Activated T-helper 2 cell treated with anti-CD3 and anti-CD28 coated beads, Interferon-gamma antibody, Interleukin-2, Interleukin-4, amounts not matched to agents 10 μg/mL and 5 μg/mL and 100 μg/mL, durations not matched to agents 14 hours and 24 hours and 36 hours (primary cell): ENCODE measurements at regions of chr18 and their contacts with region 1.

Region 1: GRCh38 chr18:55415258-55415871 is 172.6 kb downstream of the TCF4 start:
- DNase-seq: peak; percentile 53
- H3K4me3 Mint-ChIP-seq: no peak overlapping the region
- H3K27ac Mint-ChIP-seq: no peak overlapping the region
- H3K4me1 Mint-ChIP-seq: peaks cover 7% of the 10 kb centered on the region
- H3K27me3 Mint-ChIP-seq: peaks cover 4% of the 10 kb centered on the region

Region 2: DNA sequence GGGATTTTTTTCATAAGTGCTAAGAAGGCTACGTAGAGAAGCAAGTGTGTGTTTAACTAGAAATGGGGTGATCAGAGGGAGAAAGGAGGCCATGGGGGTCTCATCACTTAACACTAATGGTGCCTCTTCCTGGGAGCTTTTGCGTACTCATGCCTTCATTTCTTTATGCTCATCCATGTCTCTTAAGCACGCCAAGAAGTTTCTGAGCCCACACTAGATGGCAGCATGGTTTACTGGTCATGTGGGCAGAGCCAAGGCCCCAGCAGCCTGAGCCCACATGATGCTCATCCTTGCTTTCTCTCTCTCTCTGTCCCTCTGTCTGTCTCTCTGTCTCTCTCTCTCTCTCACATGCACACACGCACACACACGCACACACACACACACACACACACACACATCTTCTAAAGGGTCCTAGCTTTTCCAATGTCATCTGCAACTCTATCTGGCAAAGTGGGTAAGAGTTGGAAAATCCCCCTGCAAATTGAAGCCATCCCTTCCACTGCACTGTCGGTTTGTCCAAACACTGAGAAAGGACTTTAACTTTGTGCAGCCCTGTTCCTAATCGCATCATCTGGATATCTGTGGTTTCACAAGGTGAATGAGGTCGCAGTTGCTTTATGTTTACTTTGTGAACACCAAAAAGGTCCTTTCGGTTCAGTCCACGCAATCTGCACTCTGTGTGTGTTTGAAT is 319.0 kb before region 1 on chr18:
- intact Hi-C with region 1: no loop called
- DNase-seq: no peak
- H3K4me3 Mint-ChIP-seq: no peak overlapping the region
- H3K27ac Mint-ChIP-seq: no peak overlapping the region
- H3K4me1 Mint-ChIP-seq: no peaks in the 10 kb centered on the region
- H3K27me3 Mint-ChIP-seq: no peaks in the 10 kb centered on the region

Region 3: GRCh38 chr18:55343396-55344073 is 71.8 kb before region 1 on chr18:
- intact Hi-C with region 1: loop called (anchors 2 kb)
- DNase-seq: no peak
- H3K4me3 Mint-ChIP-seq: no peak overlapping the region
- H3K27ac Mint-ChIP-seq: no peak overlapping the region
- H3K4me1 Mint-ChIP-seq: peaks cover 4% of the 10 kb centered on the region
- H3K27me3 Mint-ChIP-seq: peaks cover 7% of the 10 kb centered on the region

Region 4: GRCh38 chr18:55522011-55522410 is 106.6 kb after region 1 on chr18:
- intact Hi-C with region 1: loop called (anchors 2 kb)
- DNase-seq: no peak
- H3K4me3 Mint-ChIP-seq: no peak overlapping the region
- H3K27ac Mint-ChIP-seq: no peak overlapping the region
- H3K4me1 Mint-ChIP-seq: no peaks in the 10 kb centered on the region
- H3K27me3 Mint-ChIP-seq: peaks cover 1% of the 10 kb centered on the region

Region 5: GRCh38 chr18:56575819-56576663 is 1160.7 kb after region 1 on chr18:
- intact Hi-C with region 1: loop called (anchors 1 kb)
- DNase-seq: no peak
- H3K4me3 Mint-ChIP-seq: no peak overlapping the region
- H3K27ac Mint-ChIP-seq: no peak overlapping the region
- H3K4me1 Mint-ChIP-seq: peaks cover 6% of the 10 kb centered on the region
- H3K27me3 Mint-ChIP-seq: peaks cover 9% of the 10 kb centered on the region